ENCODE measurements at regions of chr5 and their contacts with region 1.

Region 1: GRCh38 chr5:14108170-14108996 is 34.8 kb upstream of the TRIO start:
- DNase-seq: no peak
- ATAC-seq: peak; percentile 85
- H3K4me3 Mint-ChIP-seq: peak overlapping the region; percentile 76
- H3K27ac Mint-ChIP-seq: peak overlapping the region; percentile 80
- H3K4me1 Mint-ChIP-seq: peaks cover 40% of the 10 kb centered on the region
- H3K27me3 Mint-ChIP-seq: peaks cover 1% of the 10 kb centered on the region
- CTCF ChIP-seq: no peak

Region 2: DNA sequence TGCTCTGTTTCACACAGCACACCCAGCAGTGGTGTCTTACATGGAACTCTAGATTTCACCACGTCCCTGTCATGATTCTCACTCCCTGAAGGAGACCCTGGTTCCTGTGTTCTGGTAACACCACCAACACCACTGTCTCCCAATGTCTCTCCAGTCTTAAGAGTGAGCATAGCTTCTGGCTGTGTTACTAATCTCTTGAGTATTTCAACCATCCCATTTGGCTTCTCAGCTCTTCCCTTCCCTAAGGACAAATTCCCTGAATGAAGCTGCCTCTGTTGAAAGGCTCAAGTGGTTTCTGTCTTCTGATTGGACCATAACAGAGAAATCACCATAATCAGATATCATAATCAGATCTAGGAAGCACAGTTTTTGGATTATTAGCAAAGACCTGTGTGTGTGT is 475.7 kb before region 1 on chr5:
- CTCF ChIA-PET with region 1: no interaction called
- POLR2A ChIA-PET with region 1: no interaction called
- intact Hi-C with region 1: no loop called
- DNase-seq: no peak
- ATAC-seq: no peak
- H3K4me3 Mint-ChIP-seq: no peak overlapping the region
- H3K27ac Mint-ChIP-seq: no peak overlapping the region
- H3K4me1 Mint-ChIP-seq: no peaks in the 10 kb centered on the region
- H3K27me3 Mint-ChIP-seq: no peaks in the 10 kb centered on the region
- CTCF ChIP-seq: no peak

Region 3: GRCh38 chr5:14174230-14174637 is 65.9 kb after region 1 on chr5:
- CTCF ChIA-PET with region 1: no interaction called
- POLR2A ChIA-PET with region 1: no interaction called
- intact Hi-C with region 1: loop called (anchors 2 kb)
- DNase-seq: no peak
- ATAC-seq: peak; percentile 68
- H3K4me3 Mint-ChIP-seq: peak overlapping the region; percentile 78
- H3K27ac Mint-ChIP-seq: peak overlapping the region; percentile 93
- H3K4me1 Mint-ChIP-seq: peaks cover 83% of the 10 kb centered on the region
- H3K27me3 Mint-ChIP-seq: no peaks in the 10 kb centered on the region
- CTCF ChIP-seq: no peak